ENCODE measurements at regions of chr9 and their contacts with region 1.

Region 1: DNA sequence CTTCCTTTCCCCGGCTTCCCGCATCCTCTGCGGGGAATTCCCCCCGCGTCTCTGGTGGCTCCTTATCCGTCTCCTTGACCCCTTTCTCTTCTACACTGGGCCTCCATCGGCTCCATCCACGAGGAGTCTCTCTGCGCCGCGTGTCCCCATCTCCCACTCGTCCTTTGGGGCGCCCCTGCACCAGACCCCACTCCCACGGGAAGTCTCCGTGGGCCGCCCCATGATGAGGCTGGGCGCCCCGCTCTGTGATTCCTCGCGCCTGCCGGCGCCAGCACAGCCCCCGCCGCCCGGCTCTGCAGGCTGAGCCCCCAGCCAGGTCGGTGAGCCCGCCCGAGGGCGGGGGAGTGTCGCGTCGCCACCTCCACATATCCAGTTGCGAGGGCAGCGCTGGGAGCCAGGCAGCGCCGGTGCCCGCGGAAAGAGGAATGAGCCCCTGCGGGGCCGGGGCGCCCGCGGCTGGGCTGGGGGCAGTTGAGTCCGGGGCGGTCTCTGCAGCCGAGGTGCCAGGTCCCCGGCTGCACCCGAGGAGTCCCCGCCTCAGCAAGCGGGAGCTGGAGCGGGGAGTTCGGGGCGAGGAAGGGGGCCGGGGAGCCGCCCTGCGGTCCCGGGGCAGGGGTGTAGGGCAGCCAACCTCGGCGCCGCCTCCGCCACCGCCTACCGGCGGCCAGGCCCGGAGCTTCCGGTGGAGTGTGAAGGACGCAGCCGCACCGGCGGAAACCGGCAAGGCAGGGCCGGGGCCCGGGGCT is 2.1 kb upstream of the TRAF1 start:
- DNase-seq: peak; percentile 83 to 91
- H3K4me3 ChIP-seq: peak overlapping the region; percentile 63 to 85 (median 68)
- H3K27ac ChIP-seq: peak overlapping the region; percentile 90 to 97 (median 92)
- H3K4me1 ChIP-seq: peaks cover 21 to 74% (median 37%) of the 10 kb centered on the region in 4 donors
- H3K27me3 ChIP-seq: no peaks in the 10 kb centered on the region
- CTCF ChIP-seq: peak in 2 of 7 experiments; percentile 16 to 35
- EP300 ChIP-seq: peak; percentile 44
- POLR2A ChIP-seq: peak in 1 of 4 donors; percentile 23

Region 2: DNA sequence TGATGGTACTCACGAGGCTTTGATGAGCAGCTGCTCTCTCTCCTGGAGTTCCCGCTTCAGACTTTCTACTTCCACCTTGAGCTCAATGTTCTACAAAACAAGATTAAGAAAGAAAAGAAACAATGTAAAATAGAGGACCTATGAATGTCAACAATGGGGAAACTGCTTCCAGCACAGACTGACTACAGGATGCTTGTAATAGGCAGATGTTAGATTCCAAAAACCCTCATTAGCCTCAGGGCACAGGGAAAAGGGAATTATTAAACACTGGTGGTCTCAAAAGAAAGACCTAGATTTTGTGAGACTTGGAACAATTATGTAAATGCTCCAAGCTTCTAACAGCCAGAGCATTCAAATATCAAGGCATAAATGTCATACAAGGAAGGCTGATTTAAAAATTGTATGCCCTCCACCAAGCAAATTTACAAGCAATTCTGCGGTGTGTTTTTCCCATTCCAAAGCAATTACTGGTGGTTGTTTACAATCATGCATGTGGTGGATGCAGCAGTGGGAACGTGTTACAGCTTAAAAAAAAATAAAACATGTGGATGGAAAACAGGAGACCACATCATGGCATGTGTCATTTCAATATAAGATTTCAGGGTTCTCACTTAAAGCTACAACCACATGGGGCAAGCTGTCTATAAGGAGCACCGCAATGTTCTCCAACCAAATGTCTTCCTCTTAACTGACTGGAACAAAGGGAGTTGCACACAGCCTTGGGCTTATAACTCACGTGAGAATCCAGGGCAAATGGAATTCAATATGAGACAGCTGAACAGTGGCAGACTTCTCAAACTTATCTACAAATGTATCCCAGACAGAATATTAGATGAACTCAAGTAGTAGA is 382.7 kb before region 1 on chr9:
- intact Hi-C with region 1: no loop called
- DNase-seq: no peak
- H3K4me3 ChIP-seq: no peak overlapping the region
- H3K27ac ChIP-seq: no peak overlapping the region
- H3K4me1 ChIP-seq: no peaks in the 10 kb centered on the region
- H3K27me3 ChIP-seq: no peaks in the 10 kb centered on the region
- CTCF ChIP-seq: no peak
- EP300 ChIP-seq: no peak
- POLR2A ChIP-seq: no peak

Region 3: DNA sequence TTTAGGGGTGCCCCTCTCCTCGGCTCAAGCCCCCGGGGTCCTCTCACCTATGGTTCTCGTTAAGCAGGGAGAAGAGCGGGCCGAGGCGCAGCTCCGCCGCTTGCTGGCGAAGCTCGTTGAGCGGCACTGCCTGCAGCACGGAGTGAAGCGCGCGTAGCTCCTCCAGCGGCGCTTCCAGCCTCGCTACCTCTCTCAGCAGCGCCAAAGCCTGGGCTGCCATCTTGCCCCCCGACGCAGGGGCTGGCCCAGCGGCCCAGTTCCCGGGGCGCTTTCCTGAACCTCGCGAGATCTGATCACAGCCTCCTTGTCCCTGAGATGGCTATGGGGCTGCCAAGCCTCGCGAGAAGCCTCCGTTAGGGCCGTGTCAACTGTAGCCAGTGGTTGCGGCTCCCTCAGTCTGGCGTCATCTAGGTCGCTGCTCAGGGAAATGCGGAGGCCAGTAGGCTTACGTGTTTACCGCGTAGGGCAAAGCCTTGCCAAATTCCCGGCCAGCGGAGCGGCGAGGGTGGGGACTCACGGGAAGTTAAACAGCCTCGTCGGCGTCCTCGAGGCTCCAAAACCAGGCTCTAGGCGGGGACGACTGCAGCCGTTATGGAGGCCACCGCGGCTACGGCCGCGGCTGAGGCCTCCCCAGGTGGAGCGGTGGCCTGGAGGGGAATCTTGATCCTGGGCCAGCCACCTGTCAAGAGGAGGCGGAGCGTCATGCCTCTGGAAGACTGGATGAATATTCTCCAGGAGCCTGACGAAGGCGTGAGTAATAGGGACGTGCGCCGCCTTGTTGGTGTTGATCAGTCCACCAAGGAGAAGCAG is 85.8 kb before region 1 on chr9 and contains the start of gene PSMD5:
- intact Hi-C with region 1: no loop called
- DNase-seq: peak; percentile 98 to 99
- H3K4me3 ChIP-seq: peak within 1 kb of the TSS; percentile 75 to 92 (median 78)
- H3K27ac ChIP-seq: peak within 1 kb of the TSS; percentile 81 to 97 (median 96)
- H3K4me1 ChIP-seq: peaks cover 15 to 83% (median 46%) of the 10 kb centered on the region in 4 donors
- H3K27me3 ChIP-seq: no peaks in the 10 kb centered on the region
- CTCF ChIP-seq: no peak
- EP300 ChIP-seq: peak; percentile 57
- POLR2A ChIP-seq: peak in 2 of 4 donors; percentile 19 to 59
- total RNA-seq, gene PSMD5: 18.8 to 39.1 (median 28.4) TPM

Region 4: DNA sequence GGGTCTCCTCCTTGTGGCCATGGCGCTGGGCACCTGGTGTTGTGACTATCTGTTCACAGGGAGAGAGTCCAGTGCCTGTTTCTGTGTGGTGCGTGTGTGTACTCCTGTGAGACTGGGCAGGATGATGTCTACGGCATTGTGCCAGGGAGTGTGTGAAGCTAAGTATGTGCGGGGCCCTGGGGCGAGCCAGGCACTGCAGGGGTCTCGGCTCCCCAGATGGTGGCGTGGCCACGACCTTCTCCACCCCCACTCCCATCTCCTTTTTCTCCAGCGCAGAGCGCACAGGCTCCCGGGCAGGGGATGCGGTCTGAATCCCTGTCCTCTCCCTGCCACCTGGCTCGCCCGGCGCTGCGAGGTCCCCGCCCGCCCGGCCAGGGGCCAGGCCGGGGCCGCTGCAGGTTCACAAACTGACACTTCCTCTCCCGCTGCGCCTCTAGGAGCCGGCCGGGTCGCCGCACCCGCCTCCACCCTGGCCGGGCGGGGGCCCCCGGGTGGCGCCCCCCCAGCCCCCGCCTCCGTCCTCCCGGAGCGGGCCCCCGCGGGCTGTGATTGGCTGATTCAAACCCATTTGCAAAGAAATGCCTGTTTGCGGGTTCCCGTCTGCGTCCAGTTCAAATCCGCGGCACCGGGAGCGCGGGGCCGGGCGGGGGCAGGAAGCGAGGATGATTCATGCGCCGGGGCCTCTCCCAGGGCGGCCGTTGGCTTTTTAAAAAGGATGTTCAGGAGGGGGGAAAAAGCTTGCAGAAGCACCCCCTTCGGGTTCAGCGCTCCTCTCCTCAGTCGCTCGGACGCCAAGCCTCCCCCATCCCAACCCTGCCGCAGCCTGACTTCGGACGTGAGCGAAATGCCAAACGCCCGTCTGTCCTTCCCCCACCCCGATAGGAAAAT is 52.5 kb before region 1 on chr9:
- intact Hi-C with region 1: loop called (anchors 10 kb)
- DNase-seq: peak; percentile 79 to 92
- H3K4me3 ChIP-seq: peak overlapping the region; percentile 73 to 93 (median 80)
- H3K27ac ChIP-seq: peak overlapping the region; percentile 90 to 98 (median 97)
- H3K4me1 ChIP-seq: peaks cover 4 to 36% (median 26%) of the 10 kb centered on the region in 4 donors
- H3K27me3 ChIP-seq: no peaks in the 10 kb centered on the region
- CTCF ChIP-seq: peak in 1 of 7 experiments; percentile 11
- EP300 ChIP-seq: no peak
- POLR2A ChIP-seq: no peak

Region 5: DNA sequence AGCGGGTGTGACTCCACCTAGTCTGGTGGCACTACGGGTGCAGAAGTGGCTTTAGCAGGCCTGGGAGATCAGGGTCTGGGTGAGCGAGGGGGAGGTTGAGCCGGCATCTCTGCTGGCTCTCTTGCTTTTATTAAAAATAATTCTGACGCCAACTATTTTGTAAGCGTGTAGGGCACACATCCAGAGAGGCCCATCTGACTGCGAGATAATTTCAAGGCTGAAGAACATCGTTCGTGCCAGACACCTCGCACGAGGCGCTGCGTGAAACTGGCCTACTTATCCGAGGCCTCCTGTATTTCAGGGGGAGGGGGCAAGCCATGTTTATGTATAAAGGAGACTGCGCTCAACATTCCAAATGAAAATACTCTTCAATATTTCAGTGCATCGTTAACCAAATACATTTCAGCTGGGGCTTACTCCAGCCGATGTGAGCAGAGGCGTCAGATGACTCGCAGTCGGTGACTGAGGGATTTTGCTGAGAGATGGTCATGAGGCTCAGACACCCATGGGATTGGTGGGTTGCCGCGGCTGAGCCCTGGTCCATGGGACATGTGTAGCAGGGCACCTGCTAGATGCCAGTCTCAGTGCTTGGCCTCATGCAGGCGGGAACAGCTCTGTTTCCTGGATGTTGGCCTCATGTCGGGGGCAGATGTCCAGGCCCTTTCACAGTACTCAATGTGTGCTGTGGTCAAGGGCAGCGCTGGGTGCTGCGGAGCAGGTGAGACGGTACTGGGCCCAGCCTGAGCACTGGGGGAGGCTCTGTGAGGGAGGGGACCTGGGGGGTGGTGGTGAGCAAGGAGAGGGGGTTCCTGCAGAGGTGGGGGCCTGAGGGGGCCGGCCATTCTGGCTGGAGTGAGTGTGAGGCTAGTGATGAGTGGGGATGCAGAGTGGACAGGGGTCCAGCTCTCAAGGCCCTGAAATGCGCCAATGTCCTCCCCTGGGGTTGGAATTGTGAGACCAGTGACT is 924.3 kb after region 1 on chr9:
- intact Hi-C with region 1: no loop called
- DNase-seq: peak in 1 of 2 donors; percentile 72
- H3K4me3 ChIP-seq: no peak overlapping the region
- H3K27ac ChIP-seq: no peak overlapping the region
- H3K4me1 ChIP-seq: no peaks in the 10 kb centered on the region
- H3K27me3 ChIP-seq: no peaks in the 10 kb centered on the region
- CTCF ChIP-seq: no peak
- EP300 ChIP-seq: no peak
- POLR2A ChIP-seq: no peak

Measured in stomach (tissue), 19 donors.